Activated CD8-positive, alpha-beta T cell treated with anti-CD3 and anti-CD28 coated beads for 36 hours (primary cell): ENCODE measurements at regions of chr3 and their contacts with region 1.

Region 1: GRCh38 chr3:33474895-33475294 is 34.7 kb upstream of the UBP1 start:
- DNase-seq: no peak
- ATAC-seq: no peak
- H3K4me3 Mint-ChIP-seq: no peak overlapping the region
- H3K27ac Mint-ChIP-seq: no peak overlapping the region
- H3K4me1 Mint-ChIP-seq: no peaks in the 10 kb centered on the region
- H3K27me3 Mint-ChIP-seq: no peaks in the 10 kb centered on the region
- CTCF ChIP-seq: no peak

Region 2: DNA sequence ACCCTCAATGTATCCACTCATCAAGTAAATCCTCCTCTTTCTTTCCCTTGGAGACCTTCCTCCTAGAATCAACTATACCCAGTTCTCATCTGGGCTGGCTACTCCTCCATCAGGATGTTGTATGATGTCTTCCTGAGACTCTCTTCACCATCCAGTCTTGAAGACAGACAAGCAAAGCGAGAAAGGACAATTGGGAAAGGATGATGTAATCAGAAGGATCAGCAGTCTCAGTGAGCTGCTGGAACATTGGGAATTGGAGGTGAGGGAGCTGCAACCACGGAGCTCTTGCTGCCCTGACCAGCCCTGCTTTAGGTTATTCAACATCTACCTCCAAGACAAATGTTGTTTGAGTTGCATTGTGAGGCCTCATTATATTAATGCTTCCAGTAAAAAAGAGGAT is 13.3 kb after region 1 on chr3:
- CTCF ChIA-PET with region 1: no interaction called
- POLR2A ChIA-PET with region 1: no interaction called
- intact Hi-C with region 1: loop called (anchors 2 kb)
- DNase-seq: no peak
- ATAC-seq: no peak
- H3K4me3 Mint-ChIP-seq: no peak overlapping the region
- H3K27ac Mint-ChIP-seq: no peak overlapping the region
- H3K4me1 Mint-ChIP-seq: no peaks in the 10 kb centered on the region
- H3K27me3 Mint-ChIP-seq: no peaks in the 10 kb centered on the region
- CTCF ChIP-seq: no peak